Dorsolateral prefrontal cortex (tissue), 120 donors: ENCODE measurements at regions of chr5 and their contacts with region 1.

Region 1: GRCh38 chr5:149133795-149134780 is 7.2 kb upstream of the ABLIM3 start:
- DNase-seq: no peak
- H3K4me3 ChIP-seq: no peak overlapping the region
- H3K27ac ChIP-seq: no peak overlapping the region
- H3K27me3 ChIP-seq: no peaks in the 10 kb centered on the region
- CTCF ChIP-seq: no peak

Region 2: DNA sequence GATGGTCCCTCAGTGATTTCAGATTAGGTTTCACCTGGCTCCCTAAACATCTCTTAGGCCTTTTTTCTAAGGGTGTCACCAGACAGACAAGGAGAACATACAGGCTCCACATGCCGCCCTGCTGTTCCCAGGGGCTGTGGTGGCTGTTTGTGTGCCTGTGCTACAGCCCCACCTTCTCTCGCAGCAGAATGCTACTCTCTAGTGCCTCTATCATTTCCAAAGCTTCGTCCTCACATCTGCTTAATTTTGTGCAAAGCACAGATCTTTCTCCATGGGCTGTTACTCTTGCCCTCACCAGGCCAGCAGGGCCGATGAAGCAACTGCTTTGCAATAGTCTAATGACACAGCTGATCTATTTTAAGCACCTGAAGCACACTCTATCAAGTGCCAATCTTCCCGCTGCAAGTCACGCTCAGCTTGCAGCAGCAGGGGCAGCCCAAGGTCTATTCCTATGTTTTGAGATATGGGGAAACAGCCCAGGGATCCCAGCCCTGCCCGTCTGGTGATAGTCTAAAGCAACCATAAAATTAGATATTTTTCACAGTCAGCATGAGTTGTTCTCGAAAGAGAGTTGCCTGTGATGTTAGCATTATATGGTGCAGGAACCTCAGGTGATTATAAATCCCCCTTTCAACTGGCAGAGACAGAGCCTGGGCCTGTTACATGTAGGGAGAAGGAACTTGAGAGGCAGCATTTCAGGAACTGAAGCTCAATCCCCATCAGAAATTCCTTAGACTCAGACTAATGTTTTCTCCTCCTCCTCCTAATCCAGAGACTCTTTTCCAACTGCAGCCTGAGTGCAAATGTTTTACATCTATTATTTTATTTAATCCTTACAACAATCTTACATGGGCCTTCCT is 19.9 kb after region 1 on chr5:
- intact Hi-C with region 1: no loop called
- DNase-seq: peak in 1 of 10 donors; percentile 48
- H3K4me3 ChIP-seq: no peak overlapping the region
- H3K27ac ChIP-seq: peak overlapping the region in 26 of 59 donors; percentile 5 to 70 (median 36)
- H3K27me3 ChIP-seq: no peaks in the 10 kb centered on the region
- CTCF ChIP-seq: no peak

Region 3: GRCh38 chr5:149367249-149367971 is 233.3 kb after region 1 on chr5:
- intact Hi-C with region 1: loop called in 1 of 2 experiments (anchors 10 kb)
- DNase-seq: peak in 5 of 10 donors; percentile 38 to 62 (median 52)
- H3K4me3 ChIP-seq: no peak overlapping the region
- H3K27ac ChIP-seq: peak overlapping the region in 2 of 59 donors; percentile 12 to 20
- H3K27me3 ChIP-seq: no peaks in the 10 kb centered on the region
- CTCF ChIP-seq: peak; percentile 47 to 81 (median 70)